Calu3 (cell line): ENCODE measurements at regions of chr10 and their contacts with region 1.

Region 1: GRCh38 chr10:132387764-132388210 is 9.2 kb upstream of the PWWP2B start:
- DNase-seq: peak; percentile 73
- H3K4me3 Mint-ChIP-seq: no peak overlapping the region
- H3K27ac Mint-ChIP-seq: no peak overlapping the region
- H3K4me1 Mint-ChIP-seq: peaks cover 2% of the 10 kb centered on the region
- H3K27me3 Mint-ChIP-seq: peaks cover 4% of the 10 kb centered on the region
- CTCF ChIP-seq: peak; percentile 18

Region 2: GRCh38 chr10:132452631-132453469 is 65.1 kb after region 1 on chr10:
- CTCF ChIA-PET with region 1: interaction called, 3 read pairs
- intact Hi-C with region 1: loop called (anchors 2 kb)
- DNase-seq: peak; percentile 90
- H3K4me3 Mint-ChIP-seq: peak overlapping the region; percentile 43
- H3K27ac Mint-ChIP-seq: no peak overlapping the region
- H3K4me1 Mint-ChIP-seq: peaks cover 10% of the 10 kb centered on the region
- H3K27me3 Mint-ChIP-seq: no peaks in the 10 kb centered on the region
- CTCF ChIP-seq: peak; percentile 91